Colonic mucosa (tissue), 4 donors: ENCODE measurements at regions of chr9 and their contacts with region 1.

Region 1: GRCh38 chr9:12813960-12814876 is 39.4 kb downstream of the LURAP1L start:
- DNase-seq: peak; percentile 68
- H3K4me3 ChIP-seq: no peak overlapping the region
- H3K27ac ChIP-seq: peak overlapping the region; percentile 72
- H3K4me1 ChIP-seq: peaks cover 10% of the 10 kb centered on the region
- H3K27me3 ChIP-seq: no peaks in the 10 kb centered on the region
- CTCF ChIP-seq: no peak

Region 2: DNA sequence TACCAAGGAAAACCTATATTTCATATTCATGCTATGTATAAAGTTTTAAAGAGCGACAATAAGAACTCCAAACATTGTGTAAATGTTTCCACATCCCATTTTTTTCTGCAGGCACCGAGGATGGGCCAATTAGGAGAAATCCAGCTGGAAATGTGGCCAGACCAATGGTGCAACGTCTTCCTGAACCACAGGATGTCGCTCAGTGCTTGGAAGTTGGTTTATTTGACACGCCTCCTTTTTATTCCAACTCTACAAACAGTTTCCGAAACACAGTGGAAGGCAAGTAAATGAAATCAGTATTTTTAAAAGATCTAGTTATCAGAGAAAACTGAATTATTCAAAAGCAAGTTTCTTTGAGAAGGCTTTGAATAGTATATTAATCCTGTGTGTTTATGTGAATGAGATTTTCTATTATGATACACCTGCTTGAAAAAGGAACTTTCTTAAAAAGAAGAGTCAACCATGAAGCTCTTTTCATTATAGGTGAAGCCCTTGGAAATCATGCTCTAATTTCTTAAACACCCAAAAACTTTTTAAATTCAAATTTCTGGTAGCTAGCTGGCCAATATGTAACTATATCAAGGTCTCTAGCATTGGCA is 112.0 kb before region 1 on chr9:
- intact Hi-C with region 1: no loop called
- DNase-seq: peak; percentile 50
- H3K4me3 ChIP-seq: no peak overlapping the region
- H3K27ac ChIP-seq: no peak overlapping the region
- H3K4me1 ChIP-seq: no peaks in the 10 kb centered on the region
- H3K27me3 ChIP-seq: no peaks in the 10 kb centered on the region
- CTCF ChIP-seq: peak; percentile 56

Region 3: DNA sequence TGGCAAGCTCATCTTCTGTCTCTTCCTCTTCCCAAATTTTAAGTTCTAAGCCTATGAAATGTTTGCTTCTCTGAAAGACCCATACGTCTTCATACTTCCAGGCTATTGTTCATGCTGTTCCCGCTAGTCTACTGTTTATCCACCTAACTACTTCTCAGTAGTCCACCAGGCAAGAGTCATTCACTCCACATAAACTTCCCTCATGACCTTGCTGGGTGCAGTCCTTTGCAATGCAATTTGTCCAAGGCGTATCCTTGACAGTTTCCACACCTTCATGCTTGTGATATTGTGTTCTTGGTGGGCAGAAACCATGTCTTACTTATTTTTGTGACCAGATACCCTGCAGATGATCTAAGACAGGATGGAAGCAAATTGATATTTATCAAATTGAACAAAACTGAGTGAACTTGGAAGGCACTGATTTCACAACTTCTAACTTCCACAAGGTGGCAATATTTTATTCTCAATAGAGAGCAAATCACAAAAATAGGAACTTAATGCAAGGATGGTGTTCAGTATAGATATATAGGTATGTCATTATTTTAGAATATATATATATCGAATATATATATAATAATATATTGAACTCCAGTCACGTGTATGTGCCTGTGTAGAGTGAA is 90.7 kb before region 1 on chr9:
- intact Hi-C with region 1: loop called (anchors 10 kb)
- DNase-seq: peak; percentile 21
- H3K4me3 ChIP-seq: no peak overlapping the region
- H3K27ac ChIP-seq: no peak overlapping the region
- H3K4me1 ChIP-seq: no peaks in the 10 kb centered on the region
- H3K27me3 ChIP-seq: no peaks in the 10 kb centered on the region
- CTCF ChIP-seq: peak; percentile 43